Body of pancreas (tissue), 4 donors: ENCODE measurements at regions of chr10 and their contacts with region 1.

Region 1: GRCh38 chr10:101779544-101780186 is 3.6 kb downstream of the NPM3 start:
- DNase-seq: peak; percentile 80 to 86 (median 83)
- ATAC-seq: peak; percentile 68
- H3K4me3 ChIP-seq: peak overlapping the region in 1 of 2 donors; percentile 14
- H3K27ac ChIP-seq: no peak overlapping the region
- H3K4me1 ChIP-seq: peaks cover 63% of the 10 kb centered on the region
- H3K27me3 ChIP-seq: peaks cover 0 to 21% of the 10 kb centered on the region in 2 donors
- CTCF ChIP-seq: peak; percentile 75 to 93 (median 82)
- POLR2A ChIP-seq: no peak

Region 2: DNA sequence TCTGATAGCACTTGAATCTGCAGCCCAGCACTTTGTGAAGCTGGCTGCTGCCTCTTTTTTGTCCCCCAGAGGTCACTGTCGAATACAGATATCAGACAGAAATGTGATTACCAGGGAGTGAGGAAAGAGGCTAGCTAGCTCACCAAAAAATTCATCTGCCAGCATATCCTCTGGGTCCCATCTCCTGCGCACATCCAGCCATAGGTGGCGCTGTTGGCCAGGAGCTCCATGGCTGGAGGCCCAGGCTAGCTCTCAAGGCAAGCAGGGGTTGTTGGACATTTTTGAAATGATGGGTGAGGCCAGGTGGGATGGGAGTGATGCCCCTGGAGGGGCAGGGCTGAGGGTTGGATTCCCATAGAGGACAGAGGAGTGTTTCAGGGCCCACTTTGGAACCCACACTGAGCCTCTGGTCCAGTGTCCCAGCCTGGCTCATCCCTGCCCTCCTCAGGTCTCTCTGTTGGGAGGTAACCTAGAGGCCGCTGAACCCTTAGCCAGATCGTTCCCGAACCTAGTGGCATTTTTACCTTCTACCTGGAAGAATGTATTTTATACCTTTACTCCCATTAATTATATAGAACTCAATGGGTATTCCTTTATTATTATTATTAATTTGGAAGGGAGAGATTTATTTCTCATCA is 176.8 kb before region 1 on chr10:
- intact Hi-C with region 1: loop called (anchors 10 kb)
- DNase-seq: peak; percentile 57 to 72 (median 68)
- ATAC-seq: peak; percentile 59
- H3K4me3 ChIP-seq: no peak overlapping the region
- H3K27ac ChIP-seq: no peak overlapping the region
- H3K4me1 ChIP-seq: no peaks in the 10 kb centered on the region
- H3K27me3 ChIP-seq: no peaks in the 10 kb centered on the region
- CTCF ChIP-seq: peak; percentile 17 to 74 (median 69)
- POLR2A ChIP-seq: no peak